SK-N-SH (cell line): ENCODE measurements at regions of chr15 and their contacts with region 1.

Region 1: GRCh38 chr15:85742186-85742821 is 52.4 kb downstream of the KLHL25 start:
- DNase-seq: peak; percentile 32
- H3K4me3 ChIP-seq: no peak overlapping the region
- H3K27ac ChIP-seq: no peak overlapping the region
- H3K4me1 ChIP-seq: no peaks in the 10 kb centered on the region
- H3K27me3 ChIP-seq: no peaks in the 10 kb centered on the region
- CTCF ChIP-seq: no peak
- EP300 ChIP-seq: no peak
- RAD21 ChIP-seq: no peak

Region 2: GRCh38 chr15:85831415-85832113 is 89.3 kb after region 1 on chr15:
- CTCF ChIA-PET with region 1: interaction called, 10 read pairs
- POLR2A ChIA-PET with region 1: no interaction called
- DNase-seq: peak; percentile 84
- H3K4me3 ChIP-seq: no peak overlapping the region; a peak in 1 of 4 replicates
- H3K27ac ChIP-seq: peak overlapping the region in 1 of 2 experiments; percentile 17; a peak in 1 of 4 replicates
- H3K4me1 ChIP-seq: peaks cover 0 to 20% of the 10 kb centered on the region in 2 experiments; a peak in 1 of 4 replicates
- H3K27me3 ChIP-seq: no peaks in the 10 kb centered on the region; the same call in 1 of the 2 replicates
- CTCF ChIP-seq: peak; percentile 70
- EP300 ChIP-seq: peak in 1 of 2 experiments; percentile 73; a peak in 1 of 4 replicates
- RAD21 ChIP-seq: peak; percentile 84